Activated CD8-positive, alpha-beta T cell treated with anti-CD3 and anti-CD28 coated beads for 36 hours (primary cell): ENCODE measurements at regions of chr16 and their contacts with region 1.

Region 1: GRCh38 chr16:14629919-14630619 is at the start of gene PARN:
- DNase-seq: peak; percentile 98
- ATAC-seq: peak; percentile 72
- H3K4me3 Mint-ChIP-seq: peak within 1 kb of the TSS; percentile 89
- H3K27ac Mint-ChIP-seq: peak within 1 kb of the TSS; percentile 99
- H3K4me1 Mint-ChIP-seq: peaks cover 45% of the 10 kb centered on the region
- H3K27me3 Mint-ChIP-seq: no peaks in the 10 kb centered on the region
- CTCF ChIP-seq: no peak
- total RNA-seq, gene PARN: 43.0 to 45.6 TPM

Region 2: GRCh38 chr16:14510939-14511799 is 118.9 kb before region 1 on chr16:
- CTCF ChIA-PET with region 1: no interaction called
- POLR2A ChIA-PET with region 1: no interaction called
- intact Hi-C with region 1: no loop called
- DNase-seq: no peak
- ATAC-seq: no peak
- H3K4me3 Mint-ChIP-seq: no peak overlapping the region
- H3K27ac Mint-ChIP-seq: no peak overlapping the region
- H3K4me1 Mint-ChIP-seq: peaks cover 8% of the 10 kb centered on the region
- H3K27me3 Mint-ChIP-seq: no peaks in the 10 kb centered on the region
- CTCF ChIP-seq: no peak

Region 3: DNA sequence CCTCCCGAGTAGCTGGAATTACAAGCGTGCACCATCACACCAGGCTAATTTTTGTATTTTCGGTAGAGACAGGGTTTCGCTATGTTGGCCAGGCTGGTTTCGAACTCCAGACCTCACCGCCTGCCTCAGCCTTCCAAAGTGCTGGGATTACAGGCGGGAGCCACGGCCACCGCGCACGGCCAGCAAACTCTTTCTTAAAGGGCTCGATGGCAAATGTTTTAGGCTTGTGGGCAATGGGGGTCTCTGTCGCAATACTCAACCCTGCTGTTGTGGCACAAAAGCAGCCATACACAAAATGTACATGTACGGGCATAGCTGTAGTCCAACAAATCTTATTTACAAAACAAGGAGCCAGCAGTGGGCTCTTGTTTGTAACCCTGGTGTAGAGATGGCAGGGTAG is 18.4 kb before region 1 on chr16:
- CTCF ChIA-PET with region 1: no interaction called
- POLR2A ChIA-PET with region 1: interaction called, 13 read pairs
- intact Hi-C with region 1: no loop called
- DNase-seq: no peak
- ATAC-seq: no peak
- H3K4me3 Mint-ChIP-seq: no peak overlapping the region
- H3K27ac Mint-ChIP-seq: no peak overlapping the region
- H3K4me1 Mint-ChIP-seq: peaks cover 2% of the 10 kb centered on the region
- H3K27me3 Mint-ChIP-seq: no peaks in the 10 kb centered on the region
- CTCF ChIP-seq: no peak